GM12878 (cell line): ENCODE measurements at regions of chr20 and their contacts with region 1.

Region 1: DNA sequence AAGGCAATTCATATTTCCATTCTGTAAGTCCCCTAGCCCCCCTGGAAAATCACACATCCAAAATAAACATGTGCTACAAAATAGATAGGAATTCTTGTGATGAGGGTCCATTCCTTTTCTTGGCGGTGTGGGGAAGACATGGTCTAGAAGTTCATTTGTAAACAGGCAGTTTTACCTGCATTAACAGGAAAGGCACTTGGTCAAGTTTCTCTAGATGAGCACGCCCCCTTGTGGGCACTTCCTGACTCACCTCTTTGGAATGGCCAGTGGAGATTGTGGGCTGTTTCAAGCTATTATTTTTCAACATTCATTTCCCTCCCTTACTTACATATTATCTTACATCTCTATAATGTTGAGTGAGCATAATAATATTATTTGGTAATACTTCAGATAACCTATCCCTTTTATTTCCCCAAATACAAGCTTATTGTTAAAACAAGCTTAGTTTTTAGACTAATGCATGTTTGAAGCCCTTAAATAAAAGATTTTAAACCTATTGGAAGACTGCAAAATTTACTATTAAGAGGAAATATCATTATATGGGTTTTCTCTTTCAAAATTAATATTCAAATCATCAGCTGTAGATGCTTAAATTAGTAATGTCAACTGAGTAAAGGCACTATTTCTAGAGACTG is 92.1 kb downstream of the TASP1 start:
- DNase-seq: peak; percentile 17
- ATAC-seq: peak; percentile 95
- H3K4me3 ChIP-seq: no peak overlapping the region
- H3K27ac ChIP-seq: no peak overlapping the region
- H3K4me1 ChIP-seq: no peaks in the 10 kb centered on the region
- H3K27me3 ChIP-seq: no peaks in the 10 kb centered on the region
- CTCF ChIP-seq: peak; percentile 80 to 84 (median 81)
- EP300 ChIP-seq: no peak
- POLR2A ChIP-seq: no peak
- RAD21 ChIP-seq: peak; percentile 85

Region 2: GRCh38 chr20:13119583-13119982 is 427.0 kb before region 1 on chr20:
- CTCF ChIA-PET with region 1: interaction called, 172 read pairs
- POLR2A ChIA-PET with region 1: interaction called, 7 read pairs
- RAD21 ChIA-PET with region 1: interaction called, 136 read pairs
- SMC1A ChIA-PET with region 1: interaction called, 124 read pairs
- in situ Hi-C with region 1: loop called (anchors 5 kb)
- intact Hi-C with region 1: loop called (anchors 1 kb)
- DNase-seq: no peak
- ATAC-seq: peak; percentile 77
- H3K4me3 ChIP-seq: no peak overlapping the region
- H3K27ac ChIP-seq: no peak overlapping the region
- H3K4me1 ChIP-seq: no peaks in the 10 kb centered on the region
- H3K27me3 ChIP-seq: no peaks in the 10 kb centered on the region
- CTCF ChIP-seq: peak; percentile 78 to 93 (median 81)
- EP300 ChIP-seq: no peak
- POLR2A ChIP-seq: no peak
- RAD21 ChIP-seq: peak; percentile 95

Region 3: DNA sequence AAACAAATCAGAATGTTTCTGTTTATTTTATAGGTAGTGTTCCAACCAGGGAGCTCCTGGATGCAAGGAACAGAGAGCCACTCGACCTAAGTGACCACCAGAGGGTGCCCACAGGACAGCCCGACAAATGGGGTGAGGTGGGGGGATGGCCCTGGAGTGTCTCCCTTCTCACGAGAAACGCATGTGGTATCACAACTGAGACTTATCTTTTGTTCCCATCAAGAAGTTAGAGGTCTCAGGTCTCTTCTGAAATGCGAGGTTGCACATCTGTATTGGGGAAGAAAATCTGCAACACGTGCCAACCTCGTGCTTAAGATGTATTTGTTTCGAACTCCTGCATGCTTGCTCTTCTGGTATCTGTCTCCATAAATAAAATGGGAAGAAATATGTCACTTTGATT is 221.6 kb before region 1 on chr20:
- CTCF ChIA-PET with region 1: interaction called, 177 read pairs
- POLR2A ChIA-PET with region 1: interaction called, 7 read pairs
- RAD21 ChIA-PET with region 1: interaction called, 139 read pairs
- SMC1A ChIA-PET with region 1: interaction called, 159 read pairs
- in situ Hi-C with region 1: no loop called
- intact Hi-C with region 1: loop called (anchors 1 kb)
- DNase-seq: no peak
- ATAC-seq: peak; percentile 62
- H3K4me3 ChIP-seq: no peak overlapping the region
- H3K27ac ChIP-seq: no peak overlapping the region
- H3K4me1 ChIP-seq: no peaks in the 10 kb centered on the region; the same call in 1 of the 2 replicates
- H3K27me3 ChIP-seq: no peaks in the 10 kb centered on the region
- CTCF ChIP-seq: peak; percentile 28 to 42 (median 30); a peak in 4 of 6 replicates
- EP300 ChIP-seq: no peak
- POLR2A ChIP-seq: no peak
- RAD21 ChIP-seq: peak; percentile 58; the same call in 1 of the 2 replicates

Region 4: DNA sequence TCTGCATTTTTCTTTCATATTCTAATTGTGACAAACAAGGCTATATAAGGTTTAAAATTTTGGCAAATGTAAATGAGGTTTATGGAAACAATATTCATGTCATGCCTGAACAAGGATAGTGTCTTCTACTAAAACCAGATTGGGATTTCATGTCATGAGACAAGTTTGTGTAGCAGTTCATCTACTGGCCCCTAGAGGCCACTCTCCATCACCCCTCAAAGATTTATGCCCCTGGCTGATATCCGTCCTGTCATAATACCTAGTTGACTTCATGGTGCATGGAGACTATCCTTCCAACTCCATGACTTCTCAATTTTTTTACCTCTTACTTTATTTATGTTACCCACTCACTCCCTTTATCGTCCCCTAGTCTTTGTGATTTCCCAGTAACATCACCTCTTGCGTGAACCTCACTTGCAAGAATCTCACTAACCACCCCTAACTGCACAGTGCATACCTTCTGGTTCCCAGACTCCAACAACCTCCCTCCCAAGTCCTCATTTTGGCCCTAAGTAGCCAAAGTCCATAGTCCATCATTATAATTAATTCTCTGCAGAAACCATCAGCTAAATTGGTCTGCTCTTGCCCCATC is 87.7 kb before region 1 on chr20:
- CTCF ChIA-PET with region 1: interaction called, 72 read pairs
- POLR2A ChIA-PET with region 1: no interaction called
- RAD21 ChIA-PET with region 1: interaction called, 19 read pairs
- SMC1A ChIA-PET with region 1: interaction called, 24 read pairs
- in situ Hi-C with region 1: no loop called
- intact Hi-C with region 1: loop called (anchors 1 kb)
- DNase-seq: no peak
- ATAC-seq: peak; percentile 91
- H3K4me3 ChIP-seq: no peak overlapping the region
- H3K27ac ChIP-seq: no peak overlapping the region
- H3K4me1 ChIP-seq: no peaks in the 10 kb centered on the region
- H3K27me3 ChIP-seq: no peaks in the 10 kb centered on the region
- CTCF ChIP-seq: peak; percentile 72 to 89 (median 89)
- EP300 ChIP-seq: no peak
- POLR2A ChIP-seq: no peak
- RAD21 ChIP-seq: peak; percentile 74

Region 5: DNA sequence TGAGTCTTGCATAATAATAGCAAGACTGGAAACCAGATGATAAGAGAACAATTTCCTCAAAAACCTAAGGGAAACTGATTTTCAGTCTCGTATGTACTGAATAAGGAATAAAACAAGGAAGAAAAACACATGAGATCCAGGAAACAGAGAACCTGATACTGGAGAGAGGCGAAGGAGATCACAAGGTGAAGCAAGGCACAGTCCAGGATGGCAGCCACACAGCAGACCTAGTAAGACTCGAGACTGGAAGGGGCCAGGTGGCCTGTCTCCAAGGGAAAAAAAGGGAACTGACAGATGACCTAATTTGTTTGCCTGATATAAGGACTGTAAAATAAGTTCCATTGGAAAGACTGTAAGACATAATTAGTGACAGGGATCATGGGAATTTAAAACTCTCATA is 21.0 kb after region 1 on chr20:
- CTCF ChIA-PET with region 1: interaction called, 105 read pairs
- POLR2A ChIA-PET with region 1: no interaction called
- RAD21 ChIA-PET with region 1: interaction called, 6 read pairs
- SMC1A ChIA-PET with region 1: interaction called, 8 read pairs
- in situ Hi-C with region 1: no loop called
- intact Hi-C with region 1: no loop called
- DNase-seq: no peak
- ATAC-seq: no peak
- H3K4me3 ChIP-seq: no peak overlapping the region
- H3K27ac ChIP-seq: no peak overlapping the region
- H3K4me1 ChIP-seq: no peaks in the 10 kb centered on the region
- H3K27me3 ChIP-seq: no peaks in the 10 kb centered on the region
- CTCF ChIP-seq: no peak
- EP300 ChIP-seq: no peak
- POLR2A ChIP-seq: no peak
- RAD21 ChIP-seq: no peak

Region 6: GRCh38 chr20:13632431-13632830 is 85.8 kb after region 1 on chr20:
- CTCF ChIA-PET with region 1: no interaction called
- POLR2A ChIA-PET with region 1: no interaction called
- RAD21 ChIA-PET with region 1: no interaction called
- SMC1A ChIA-PET with region 1: no interaction called
- in situ Hi-C with region 1: no loop called
- intact Hi-C with region 1: no loop called
- DNase-seq: no peak
- ATAC-seq: no peak
- H3K4me3 ChIP-seq: no peak overlapping the region
- H3K27ac ChIP-seq: no peak overlapping the region
- H3K4me1 ChIP-seq: no peaks in the 10 kb centered on the region
- H3K27me3 ChIP-seq: no peaks in the 10 kb centered on the region
- CTCF ChIP-seq: no peak
- EP300 ChIP-seq: no peak
- POLR2A ChIP-seq: no peak
- RAD21 ChIP-seq: no peak

Region 7: GRCh38 chr20:13777171-13777601 is 230.6 kb after region 1 on chr20:
- CTCF ChIA-PET with region 1: interaction called, 93 read pairs
- POLR2A ChIA-PET with region 1: no interaction called
- RAD21 ChIA-PET with region 1: interaction called, 57 read pairs
- SMC1A ChIA-PET with region 1: interaction called, 50 read pairs
- in situ Hi-C with region 1: no loop called
- intact Hi-C with region 1: no loop called
- DNase-seq: no peak
- ATAC-seq: peak; percentile 57
- H3K4me3 ChIP-seq: no peak overlapping the region
- H3K27ac ChIP-seq: peak overlapping the region; percentile 15; the same call in 1 of the 2 replicates
- H3K4me1 ChIP-seq: peaks cover 13% of the 10 kb centered on the region; the same call in 1 of the 2 replicates
- H3K27me3 ChIP-seq: no peaks in the 10 kb centered on the region
- CTCF ChIP-seq: no peak
- EP300 ChIP-seq: no peak
- POLR2A ChIP-seq: no peak
- RAD21 ChIP-seq: no peak